ENCODE measurements at regions of chr3 and their contacts with region 1.

Region 1: DNA sequence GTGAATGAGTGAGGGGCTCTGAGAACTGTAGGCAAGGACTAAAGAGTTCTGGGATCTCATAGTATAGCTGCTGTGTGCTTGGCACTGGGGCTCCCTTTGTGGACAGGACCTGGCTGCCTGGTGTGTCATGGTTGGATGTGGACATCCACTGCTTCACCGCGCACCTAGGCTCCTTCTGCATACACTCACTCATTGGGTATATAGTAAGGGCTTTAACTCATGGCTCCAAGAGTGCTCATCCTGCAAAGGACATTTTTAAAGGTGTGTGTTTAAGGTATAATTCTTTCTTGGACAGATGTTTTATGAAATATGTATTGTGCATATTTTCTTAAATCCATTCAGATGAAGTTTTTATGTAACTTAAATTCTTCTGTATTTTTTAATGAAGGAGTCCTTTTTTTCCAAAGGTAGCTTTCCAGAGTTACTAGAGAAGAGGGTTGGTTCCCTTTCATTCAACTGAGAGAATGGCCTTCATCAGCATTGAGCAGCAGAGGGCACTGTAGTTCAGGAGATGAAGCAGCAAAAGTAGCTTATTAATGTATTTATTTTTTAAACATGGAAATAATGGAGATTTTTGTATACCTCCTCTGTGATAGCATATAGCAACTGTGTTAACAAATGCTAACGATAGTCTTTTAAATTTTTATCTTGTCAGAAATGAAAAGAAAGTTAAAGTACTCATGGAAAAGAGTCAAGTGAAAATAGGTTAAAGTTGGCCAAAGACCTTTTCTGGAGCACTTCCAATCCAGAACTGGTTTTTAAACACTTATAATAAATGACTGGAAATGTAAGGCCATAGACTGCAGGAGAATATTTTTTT is 25.2 kb downstream of the OXNAD1 start:
- DNase-seq: peak in 1 of 2 donors; percentile 82
- ATAC-seq: peak in 2 of 3 donors; percentile 24 to 33
- H3K4me3 ChIP-seq: no peak overlapping the region
- H3K4me3 Mint-ChIP-seq: peak overlapping the region; percentile 85
- H3K27ac ChIP-seq: peak overlapping the region; percentile 81
- H3K27ac Mint-ChIP-seq: peak overlapping the region; percentile 87 to 90
- H3K4me1 ChIP-seq: peaks cover 47% of the 10 kb centered on the region
- H3K4me1 Mint-ChIP-seq: peaks cover 67 to 86% of the 10 kb centered on the region in 2 donors
- H3K27me3 ChIP-seq: no peaks in the 10 kb centered on the region
- H3K27me3 Mint-ChIP-seq: no peaks in the 10 kb centered on the region
- CTCF ChIP-seq: peak; percentile 93

Region 2: GRCh38 chr3:16300881-16301359 is 10.7 kb after region 1 on chr3:
- intact Hi-C with region 1: loop called (anchors 2 kb)
- DNase-seq: peak in 1 of 2 donors; percentile 86
- ATAC-seq: peak; percentile 73 to 90 (median 88)
- H3K4me3 ChIP-seq: peak overlapping the region; percentile 1
- H3K4me3 Mint-ChIP-seq: peak overlapping the region; percentile 96
- H3K27ac ChIP-seq: peak overlapping the region; percentile 83
- H3K27ac Mint-ChIP-seq: peak overlapping the region; percentile 95 to 98
- H3K4me1 ChIP-seq: peaks cover 50% of the 10 kb centered on the region
- H3K4me1 Mint-ChIP-seq: peaks cover 68 to 86% of the 10 kb centered on the region in 2 donors
- H3K27me3 ChIP-seq: no peaks in the 10 kb centered on the region
- H3K27me3 Mint-ChIP-seq: no peaks in the 10 kb centered on the region
- CTCF ChIP-seq: no peak

Region 3: GRCh38 chr3:16319307-16319706 is 29.1 kb after region 1 on chr3:
- intact Hi-C with region 1: loop called (anchors 1 kb)
- DNase-seq: peak in 1 of 2 donors; percentile 92
- ATAC-seq: peak; percentile 71 to 81 (median 74)
- H3K4me3 ChIP-seq: no peak overlapping the region
- H3K4me3 Mint-ChIP-seq: no peak overlapping the region
- H3K27ac ChIP-seq: no peak overlapping the region
- H3K27ac Mint-ChIP-seq: peak overlapping the region; percentile 64 to 76
- H3K4me1 ChIP-seq: peaks cover 46% of the 10 kb centered on the region
- H3K4me1 Mint-ChIP-seq: peaks cover 45 to 47% of the 10 kb centered on the region in 2 donors
- H3K27me3 ChIP-seq: no peaks in the 10 kb centered on the region
- H3K27me3 Mint-ChIP-seq: no peaks in the 10 kb centered on the region
- CTCF ChIP-seq: peak; percentile 41

Region 4: GRCh38 chr3:16516695-16517481 is 226.7 kb after region 1 on chr3:
- intact Hi-C with region 1: loop called (anchors 1 kb)
- DNase-seq: peak; percentile 47 to 50
- ATAC-seq: peak; percentile 7 to 28 (median 19)
- H3K4me3 ChIP-seq: no peak overlapping the region
- H3K4me3 Mint-ChIP-seq: peak overlapping the region; percentile 97
- H3K27ac ChIP-seq: peak overlapping the region; percentile 80
- H3K27ac Mint-ChIP-seq: peak overlapping the region; percentile 91 to 97
- H3K4me1 ChIP-seq: peaks cover 54% of the 10 kb centered on the region
- H3K4me1 Mint-ChIP-seq: peaks cover 75 to 81% of the 10 kb centered on the region in 2 donors
- H3K27me3 ChIP-seq: no peaks in the 10 kb centered on the region
- H3K27me3 Mint-ChIP-seq: no peaks in the 10 kb centered on the region
- CTCF ChIP-seq: no peak

Region 5: GRCh38 chr3:16849229-16849628 is 559.0 kb after region 1 on chr3:
- intact Hi-C with region 1: loop called (anchors 10 kb)
- DNase-seq: peak; percentile 60 to 85
- ATAC-seq: peak; percentile 78 to 97 (median 96)
- H3K4me3 ChIP-seq: peak overlapping the region; percentile 1
- H3K4me3 Mint-ChIP-seq: peak overlapping the region; percentile 62
- H3K27ac ChIP-seq: peak overlapping the region; percentile 40
- H3K27ac Mint-ChIP-seq: peak overlapping the region; percentile 3 to 79
- H3K4me1 ChIP-seq: peaks cover 23% of the 10 kb centered on the region
- H3K4me1 Mint-ChIP-seq: peaks cover 37 to 38% of the 10 kb centered on the region in 2 donors
- H3K27me3 ChIP-seq: no peaks in the 10 kb centered on the region
- H3K27me3 Mint-ChIP-seq: peaks cover 0 to 6% of the 10 kb centered on the region in 2 donors
- CTCF ChIP-seq: no peak

Measured in natural killer cell (primary cell).